Activated CD8-positive, alpha-beta memory T cell treated with anti-CD3 and anti-CD28 coated beads, Interleukin-2, amount 10 ng/mL, durations not matched to agents 7 days and 5 days (primary cell): ENCODE measurements at regions of chr11 and their contacts with region 1.

Region 1: DNA sequence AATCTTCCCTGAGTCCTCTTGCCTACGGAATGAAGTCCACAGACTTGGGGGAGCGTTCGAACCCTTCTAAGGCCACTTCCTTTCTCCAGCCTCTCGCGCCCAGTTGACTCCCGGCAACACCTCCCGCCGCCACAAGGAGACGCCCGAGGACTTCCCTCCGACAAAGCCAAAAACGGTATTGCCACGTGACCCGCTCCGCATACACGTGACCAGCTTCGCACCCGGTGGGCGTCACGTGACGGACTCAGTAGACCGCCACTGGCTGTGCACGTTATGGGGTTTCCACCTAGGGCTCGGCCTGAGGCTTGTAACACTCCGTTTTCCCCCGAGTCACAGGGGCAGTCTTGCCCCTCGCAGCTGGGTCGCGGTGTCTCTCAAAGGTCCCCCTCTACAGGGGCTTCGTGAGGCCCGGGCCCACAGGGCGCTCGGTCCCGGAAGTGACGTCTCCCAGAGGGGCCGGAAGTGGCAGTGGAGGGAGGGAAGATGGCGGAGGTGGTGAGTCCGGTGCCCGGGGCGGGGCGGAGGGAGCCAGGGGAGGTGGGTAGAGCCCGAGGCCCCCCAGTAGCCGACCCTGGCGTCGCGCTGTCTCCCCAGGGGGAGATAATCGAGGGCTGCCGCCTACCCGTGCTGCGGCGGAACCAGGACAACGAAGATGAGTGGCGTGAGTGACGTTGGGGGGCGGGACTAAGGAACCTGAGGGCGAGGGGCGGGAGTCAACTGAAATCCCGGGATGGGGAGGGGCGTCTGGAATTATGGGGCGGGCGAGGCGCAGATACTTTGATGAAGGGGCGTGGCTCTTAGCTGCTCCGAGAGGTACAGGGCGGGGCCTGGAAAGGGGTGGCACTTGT is at the start of gene KAT5:
- DNase-seq: peak; percentile 100
- ATAC-seq: peak; percentile 87
- H3K4me3 Mint-ChIP-seq: peak within 1 kb of the TSS; percentile 83
- H3K27ac Mint-ChIP-seq: peak within 1 kb of the TSS; percentile 98
- H3K4me1 Mint-ChIP-seq: peaks cover 36% of the 10 kb centered on the region
- H3K27me3 Mint-ChIP-seq: peaks cover 2% of the 10 kb centered on the region
- total RNA-seq, gene KAT5: 62.0 to 69.8 TPM

Region 2: DNA sequence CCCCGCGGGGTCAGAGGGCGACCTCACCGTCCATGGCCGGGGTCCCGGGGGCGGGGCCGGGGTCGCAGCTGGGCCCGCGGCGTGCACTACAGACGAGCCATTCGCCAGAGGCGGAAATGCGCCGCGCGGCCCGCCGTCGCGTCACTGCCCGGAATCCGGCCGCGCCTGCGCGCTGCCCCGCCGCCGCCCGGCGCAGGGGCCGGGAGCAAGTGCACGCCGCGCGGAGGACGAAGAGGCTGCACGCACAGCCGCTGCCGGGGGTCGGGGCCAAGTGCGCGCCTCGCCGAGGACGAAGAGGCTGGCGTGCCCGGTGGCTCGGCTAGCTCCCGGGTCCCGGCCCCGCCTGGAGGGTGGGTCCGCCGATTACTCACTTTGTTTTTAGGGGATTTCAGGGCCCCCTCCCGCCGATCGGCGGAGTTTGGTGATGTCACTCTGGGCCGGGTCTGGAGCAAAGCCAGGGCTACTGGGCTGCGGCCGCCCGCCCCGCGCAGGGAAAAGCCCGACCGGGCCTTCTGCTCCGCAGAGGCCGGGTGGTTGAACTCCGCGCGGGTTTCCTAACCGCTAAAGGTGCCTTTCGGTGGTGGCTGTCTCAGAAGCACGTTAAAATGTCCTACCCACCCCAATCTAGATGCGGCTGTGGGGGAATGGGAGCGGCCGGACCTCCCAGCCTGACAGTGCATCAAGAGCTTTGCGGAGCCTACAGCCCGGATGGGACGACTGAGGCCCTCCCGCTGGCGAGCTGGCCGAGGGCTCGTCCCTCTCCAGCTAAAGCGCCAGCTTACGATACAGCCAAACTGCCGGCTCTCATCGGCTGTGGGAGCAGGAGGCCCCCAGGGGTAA is 49.0 kb before region 1 on chr11 and contains the start of gene RELA:
- CTCF ChIA-PET with region 1: interaction called, 11 read pairs
- DNase-seq: peak; percentile 94
- ATAC-seq: peak; percentile 90
- H3K4me3 Mint-ChIP-seq: peak within 1 kb of the TSS; percentile 83
- H3K27ac Mint-ChIP-seq: peak within 1 kb of the TSS; percentile 85
- H3K4me1 Mint-ChIP-seq: peaks cover 32% of the 10 kb centered on the region
- H3K27me3 Mint-ChIP-seq: no peaks in the 10 kb centered on the region
- total RNA-seq, gene RELA: 81.3 to 82.0 TPM

Region 3: DNA sequence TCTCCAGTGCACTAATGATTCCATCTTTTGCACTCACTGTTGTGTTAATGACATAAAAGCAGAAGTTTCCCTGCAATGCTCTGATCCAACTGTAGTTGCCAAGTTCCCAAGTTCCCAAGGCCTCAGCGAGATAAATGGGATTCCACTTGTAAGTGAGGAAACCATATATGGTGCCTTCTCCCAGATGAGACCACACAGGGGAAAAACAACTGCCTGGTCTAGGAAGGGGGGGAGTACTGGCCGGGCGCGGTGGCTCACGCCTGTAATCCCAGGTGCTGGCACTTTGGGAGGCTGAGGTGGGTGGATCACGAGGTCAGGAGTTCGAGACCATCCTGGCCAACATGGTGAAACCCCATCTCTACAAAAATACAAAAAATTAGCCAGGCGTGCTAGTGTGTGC is 26.0 kb before region 1 on chr11:
- CTCF ChIA-PET with region 1: no interaction called
- DNase-seq: no peak
- ATAC-seq: no peak
- H3K4me3 Mint-ChIP-seq: no peak overlapping the region
- H3K27ac Mint-ChIP-seq: no peak overlapping the region
- H3K4me1 Mint-ChIP-seq: no peaks in the 10 kb centered on the region
- H3K27me3 Mint-ChIP-seq: peaks cover 18% of the 10 kb centered on the region

Region 4: GRCh38 chr11:65766535-65766934 is 54.5 kb after region 1 on chr11:
- CTCF ChIA-PET with region 1: interaction called, 36 read pairs
- DNase-seq: no peak
- ATAC-seq: no peak
- H3K4me3 Mint-ChIP-seq: no peak overlapping the region
- H3K27ac Mint-ChIP-seq: no peak overlapping the region
- H3K4me1 Mint-ChIP-seq: peaks cover 8% of the 10 kb centered on the region
- H3K27me3 Mint-ChIP-seq: peaks cover 3% of the 10 kb centered on the region

Region 5: GRCh38 chr11:65785319-65786000 is 73.5 kb after region 1 on chr11:
- CTCF ChIA-PET with region 1: interaction called, 49 read pairs
- DNase-seq: no peak
- ATAC-seq: no peak
- H3K4me3 Mint-ChIP-seq: no peak overlapping the region
- H3K27ac Mint-ChIP-seq: no peak overlapping the region
- H3K4me1 Mint-ChIP-seq: peaks cover 19% of the 10 kb centered on the region
- H3K27me3 Mint-ChIP-seq: peaks cover 52% of the 10 kb centered on the region

Region 6: DNA sequence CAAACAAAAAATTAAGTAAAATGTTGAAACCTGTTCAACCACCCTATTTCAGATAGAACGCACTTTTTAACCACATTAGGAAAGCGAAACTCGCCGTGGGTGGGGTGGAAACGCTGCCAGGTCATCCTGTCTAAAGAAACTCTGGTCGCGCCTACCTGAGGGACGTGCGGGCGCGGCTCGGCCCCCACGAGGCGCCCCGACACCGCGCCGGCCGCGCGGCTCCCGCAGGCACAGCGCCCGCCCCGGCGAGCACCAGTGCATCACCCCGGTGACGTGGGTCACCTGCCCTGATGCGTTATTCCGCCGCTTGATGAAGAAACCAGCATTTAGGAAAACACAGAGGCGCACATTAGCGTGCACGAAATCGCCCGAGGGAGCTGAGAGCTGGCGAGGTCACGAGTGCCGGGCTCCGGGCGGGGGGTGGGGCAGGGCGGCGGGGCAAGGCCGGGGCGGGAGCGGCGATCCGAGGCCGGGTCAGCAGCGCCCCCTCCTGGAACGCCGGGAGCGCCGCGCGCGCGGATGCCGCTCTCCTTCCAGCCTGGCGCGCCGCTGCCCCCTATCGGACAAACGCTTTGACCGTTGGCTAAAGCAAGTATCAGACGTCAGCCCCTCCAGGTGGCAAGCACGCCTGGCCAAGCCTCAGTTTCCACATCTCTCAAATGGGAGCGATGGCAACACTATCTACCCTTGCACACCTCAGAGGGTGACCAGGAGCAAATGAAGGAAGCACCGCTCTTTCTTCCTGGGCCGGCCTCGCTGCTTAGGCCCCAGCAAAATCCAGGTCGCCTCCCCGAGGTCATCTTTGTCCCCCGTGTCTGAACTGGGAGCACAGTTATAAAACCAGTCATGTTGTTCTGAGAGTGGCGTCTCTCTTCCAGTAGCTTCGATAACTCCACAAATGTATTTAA is 106.1 kb after region 1 on chr11:
- CTCF ChIA-PET with region 1: interaction called, 70 read pairs
- DNase-seq: peak; percentile 95
- ATAC-seq: peak; percentile 91
- H3K4me3 Mint-ChIP-seq: peak overlapping the region; percentile 75
- H3K27ac Mint-ChIP-seq: peak overlapping the region; percentile 70
- H3K4me1 Mint-ChIP-seq: peaks cover 18% of the 10 kb centered on the region
- H3K27me3 Mint-ChIP-seq: peaks cover 4% of the 10 kb centered on the region

Region 7: GRCh38 chr11:65833297-65834030 is 121.5 kb after region 1 on chr11 and contains the start of gene SNX32:
- CTCF ChIA-PET with region 1: interaction called, 11 read pairs
- DNase-seq: peak; percentile 97
- ATAC-seq: peak; percentile 100
- H3K4me3 Mint-ChIP-seq: no peak within 1 kb of the TSS
- H3K27ac Mint-ChIP-seq: peak within 1 kb of the TSS; percentile 31
- H3K4me1 Mint-ChIP-seq: peaks cover 15% of the 10 kb centered on the region
- H3K27me3 Mint-ChIP-seq: peaks cover 28% of the 10 kb centered on the region
- total RNA-seq, gene SNX32: 1.7 to 2.4 TPM

Region 8: GRCh38 chr11:66022401-66023185 is 310.6 kb after region 1 on chr11:
- CTCF ChIA-PET with region 1: interaction called, 11 read pairs
- DNase-seq: peak; percentile 83
- ATAC-seq: peak; percentile 91
- H3K4me3 Mint-ChIP-seq: no peak overlapping the region
- H3K27ac Mint-ChIP-seq: no peak overlapping the region
- H3K4me1 Mint-ChIP-seq: peaks cover 23% of the 10 kb centered on the region
- H3K27me3 Mint-ChIP-seq: peaks cover 8% of the 10 kb centered on the region